Caki2 (cell line): ENCODE measurements at regions of chr9 and their contacts with region 1.

Region 1: GRCh38 chr9:90331826-90332575 is 310.6 kb downstream of the DIRAS2 start:
- DNase-seq: peak; percentile 94

Region 2: GRCh38 chr9:90240541-90240940 is 91.5 kb before region 1 on chr9:
- in situ Hi-C with region 1: no loop called
- DNase-seq: no peak

Region 3: GRCh38 chr9:90271707-90272106 is 60.3 kb before region 1 on chr9:
- in situ Hi-C with region 1: no loop called
- DNase-seq: no peak

Region 4: DNA sequence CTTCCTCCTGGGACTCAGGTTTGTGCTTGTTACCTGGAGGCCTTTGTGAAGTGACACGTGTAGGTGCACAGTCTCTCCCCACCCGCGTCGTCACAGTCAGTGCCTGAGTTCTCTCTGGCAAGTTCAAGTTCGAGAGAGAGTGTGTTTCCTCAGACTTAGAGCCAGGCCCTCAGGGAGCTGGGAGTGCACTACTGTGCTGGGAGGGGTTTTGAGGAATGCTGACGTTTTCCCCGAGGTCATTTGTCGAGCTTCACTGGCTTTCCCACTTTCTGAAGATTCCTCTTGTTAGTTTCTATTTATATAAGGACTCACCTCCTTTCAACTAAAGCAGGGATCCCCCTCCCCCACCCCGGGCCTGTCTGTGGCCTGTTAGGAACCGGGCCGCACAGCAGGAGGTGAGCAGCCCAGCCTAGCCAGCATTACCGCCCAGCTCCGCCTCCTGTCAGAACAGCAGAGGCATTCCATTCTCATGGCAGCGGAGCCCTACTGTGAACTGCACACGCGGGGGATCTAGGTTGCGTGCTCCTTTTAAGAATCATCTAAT is 101.5 kb after region 1 on chr9:
- in situ Hi-C with region 1: loop called (anchors 10 kb)
- DNase-seq: peak; percentile 99